A673 (cell line): ENCODE measurements at regions of chr4 and their contacts with region 1.

Region 1: DNA sequence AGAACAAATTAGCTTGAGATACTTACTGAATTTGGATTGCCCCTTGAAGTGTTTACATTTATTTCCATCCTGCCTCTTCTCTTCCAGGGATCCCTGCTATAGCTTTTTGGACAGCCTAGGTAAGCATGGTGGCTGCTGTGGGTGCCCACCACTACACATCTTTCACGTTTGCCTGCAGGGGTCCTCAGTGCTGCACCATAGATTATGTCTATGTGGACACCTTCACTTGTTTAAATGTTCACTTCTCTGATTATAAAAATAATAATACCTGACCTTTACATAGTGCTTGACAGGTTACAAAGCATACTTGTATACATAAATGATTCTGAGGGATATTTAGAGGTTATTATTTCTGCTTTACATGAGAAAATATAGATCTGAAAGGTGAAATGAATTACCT is 67.9 kb upstream of the SLC4A4 start:
- DNase-seq: peak; percentile 46
- H3K4me3 ChIP-seq: no peak overlapping the region
- H3K27ac ChIP-seq: no peak overlapping the region
- H3K4me1 ChIP-seq: peaks cover 11% of the 10 kb centered on the region
- H3K27me3 ChIP-seq: no peaks in the 10 kb centered on the region
- CTCF ChIP-seq: peak; percentile 52

Region 2: GRCh38 chr4:71553605-71554004 is 282.7 kb after region 1 on chr4:
- CTCF ChIA-PET with region 1: no interaction called
- POLR2A ChIA-PET with region 1: no interaction called
- intact Hi-C with region 1: loop called (anchors 2 kb)
- DNase-seq: peak; percentile 4
- H3K4me3 ChIP-seq: no peak overlapping the region
- H3K27ac ChIP-seq: no peak overlapping the region
- H3K4me1 ChIP-seq: no peaks in the 10 kb centered on the region
- H3K27me3 ChIP-seq: no peaks in the 10 kb centered on the region
- CTCF ChIP-seq: peak; percentile 43; the same call in 1 of the 2 replicates